Left cardiac atrium (tissue), 4 donors: ENCODE measurements at regions of chr5 and their contacts with region 1.

Region 1: DNA sequence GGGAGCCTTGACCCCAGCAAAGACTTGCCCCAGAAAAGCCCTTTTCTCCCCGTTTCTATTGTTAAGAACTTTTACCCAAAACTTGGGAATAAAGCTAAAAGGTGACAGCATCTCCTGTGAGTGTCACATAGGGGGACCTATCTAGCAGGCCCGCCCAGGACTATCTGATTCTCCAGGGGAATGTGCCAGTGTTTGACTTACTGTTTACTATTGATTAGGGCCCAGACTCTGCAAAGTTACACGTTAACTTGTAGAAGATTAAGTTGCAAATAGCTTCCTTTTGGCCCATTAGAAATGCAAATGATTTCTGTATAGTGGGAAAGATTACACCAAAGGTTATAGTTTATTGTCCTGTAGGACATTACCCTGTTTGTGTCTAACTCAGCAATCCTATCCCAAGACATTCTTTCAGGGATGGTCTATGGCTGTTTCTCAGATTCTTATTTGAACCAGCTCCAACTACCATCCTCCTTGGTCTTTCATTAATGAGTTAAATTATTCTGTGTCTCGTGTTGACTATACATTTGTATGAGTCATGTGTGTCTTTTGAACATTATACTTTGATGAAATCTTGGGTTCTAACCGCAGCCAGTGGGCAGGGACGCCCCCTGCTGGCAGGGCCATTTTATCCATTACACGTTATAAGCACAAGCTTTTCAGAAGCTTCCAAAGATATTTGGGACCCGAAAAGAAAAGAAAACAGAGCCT is 60.7 kb downstream of the HRH2 start:
- DNase-seq: peak; percentile 62
- ATAC-seq: peak in 1 of 2 donors; percentile 41

Region 2: GRCh38 chr5:175517818-175518450 is 200.6 kb before region 1 on chr5:
- intact Hi-C with region 1: no loop called
- DNase-seq: no peak
- ATAC-seq: peak in 1 of 2 donors; percentile 82

Region 3: DNA sequence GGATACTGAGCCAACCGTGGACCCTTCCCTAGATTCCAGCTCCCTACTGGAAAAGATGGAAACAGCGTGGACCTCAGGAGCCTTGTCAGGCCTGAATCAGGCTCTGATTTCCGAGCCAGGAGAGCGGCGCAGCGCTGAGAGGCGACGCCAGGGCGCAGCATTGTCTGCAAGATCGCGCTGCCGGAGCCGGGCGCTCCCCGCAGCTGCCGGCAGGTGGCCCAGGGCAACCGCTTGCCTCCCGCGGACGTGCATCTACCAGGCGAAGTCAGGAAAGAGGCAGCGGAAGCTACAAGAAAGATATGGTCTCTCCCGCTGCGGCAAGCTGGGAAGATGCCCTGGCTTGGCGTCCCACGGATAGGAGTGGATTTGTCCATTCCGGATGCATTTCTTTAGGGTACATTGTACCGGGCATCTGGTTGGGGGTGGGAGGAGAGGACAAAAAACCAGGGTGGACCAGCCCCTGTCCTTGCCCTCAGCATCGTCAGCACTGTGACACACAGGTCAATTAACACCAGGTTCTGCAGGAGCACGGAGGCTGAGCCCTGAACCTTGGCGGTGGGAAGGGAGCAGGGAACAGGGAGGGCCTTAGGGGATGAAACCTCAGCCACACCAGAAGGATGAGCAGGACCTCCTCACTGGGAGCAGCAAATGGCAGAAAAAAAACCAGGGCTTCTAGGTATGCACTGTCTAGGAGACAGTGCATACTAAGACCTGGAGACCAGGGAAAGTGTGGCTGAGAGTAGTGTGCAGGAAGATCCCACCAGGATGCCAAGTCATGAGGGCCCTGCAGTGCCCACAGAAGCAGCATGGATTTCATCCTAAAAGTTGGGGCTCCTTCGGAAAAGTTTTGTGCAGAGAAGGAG is 184.3 kb before region 1 on chr5:
- intact Hi-C with region 1: loop called (anchors 2 to 5 kb)
- DNase-seq: peak; percentile 82
- ATAC-seq: peak; percentile 96 to 97

Region 4: DNA sequence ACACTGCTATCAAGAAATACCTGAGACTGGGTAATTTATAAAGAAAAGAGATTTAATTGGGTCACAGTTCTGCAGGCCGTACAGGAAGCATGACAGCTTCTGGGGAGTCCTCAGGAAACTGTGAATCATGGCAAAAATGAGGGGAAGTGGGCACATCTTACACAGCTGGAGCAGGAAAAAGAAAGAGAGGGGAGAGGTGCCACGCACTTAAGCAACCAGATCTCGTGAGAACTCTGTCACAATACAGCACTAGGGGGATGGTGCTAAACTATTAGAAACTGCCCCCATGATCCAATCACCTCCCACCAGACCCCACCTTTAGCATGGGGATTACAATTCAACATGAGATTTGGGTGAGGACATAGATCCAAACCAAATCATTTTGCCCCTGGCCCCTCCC is 47.3 kb after region 1 on chr5:
- intact Hi-C with region 1: no loop called
- DNase-seq: no peak
- ATAC-seq: no peak